Ascending aorta (tissue), 2 donors: ENCODE measurements at regions of chr13 and their contacts with region 1.

Region 1: GRCh38 chr13:21060987-21061763 is at the start of gene LATS2:
- DNase-seq: peak; percentile 82 to 98
- H3K4me3 ChIP-seq: peak within 1 kb of the TSS; percentile 84 to 89
- H3K27ac ChIP-seq: peak within 1 kb of the TSS; percentile 98 to 100
- H3K4me1 ChIP-seq: peaks cover 4 to 22% of the 10 kb centered on the region in 2 donors
- H3K27me3 ChIP-seq: no peaks in the 10 kb centered on the region
- CTCF ChIP-seq: peak in 2 of 3 experiments; percentile 41 to 50
- total RNA-seq, gene LATS2: 49.0 TPM

Region 2: GRCh38 chr13:20773194-20774080 is 287.7 kb before region 1 on chr13 and contains the start of gene EEF1AKMT1:
- intact Hi-C with region 1: loop called (anchors 10 kb)
- DNase-seq: peak; percentile 60 to 96
- H3K4me3 ChIP-seq: peak within 1 kb of the TSS; percentile 61 to 80
- H3K27ac ChIP-seq: peak within 1 kb of the TSS; percentile 85 to 87
- H3K4me1 ChIP-seq: peaks cover 0 to 7% of the 10 kb centered on the region in 2 donors
- H3K27me3 ChIP-seq: no peaks in the 10 kb centered on the region
- CTCF ChIP-seq: no peak
- total RNA-seq, gene EEF1AKMT1: not detected

Region 3: DNA sequence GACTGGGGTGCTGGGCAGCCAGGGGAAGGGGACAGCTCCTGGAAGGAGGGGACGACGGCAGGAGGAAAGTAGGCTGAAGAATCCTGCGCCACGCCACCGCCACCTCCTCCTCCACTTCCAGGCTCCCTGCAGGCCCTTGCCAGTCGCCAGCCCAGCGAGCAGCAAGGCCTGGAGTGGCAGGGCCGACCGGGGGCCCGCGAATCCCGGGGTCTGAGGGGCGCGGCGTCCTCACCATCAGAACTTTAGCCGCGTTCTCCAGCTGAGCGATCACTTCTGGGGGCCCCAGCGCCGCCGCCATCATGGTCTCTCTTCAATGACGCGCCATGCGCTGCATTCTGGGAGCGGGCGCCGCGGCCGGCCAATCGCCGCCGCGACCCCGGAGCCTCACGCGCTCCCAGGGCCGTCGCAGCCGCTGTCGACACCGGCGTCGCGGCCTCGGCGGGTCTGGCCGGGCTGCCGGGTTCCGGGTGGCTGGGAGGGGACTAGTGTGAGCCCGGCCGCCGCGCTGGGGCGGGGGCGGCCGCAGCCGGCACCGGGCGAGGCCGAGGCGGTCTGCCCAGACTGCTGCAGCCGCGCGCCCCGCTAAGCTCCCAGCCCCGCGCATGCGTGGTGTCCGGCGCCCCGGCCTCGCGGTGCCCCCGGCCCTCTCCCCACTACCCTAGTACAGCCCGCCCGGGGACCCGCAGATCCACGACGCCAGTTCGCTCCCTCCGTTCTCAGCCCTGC is 158.6 kb before region 1 on chr13 and contains the start of gene XPO4:
- intact Hi-C with region 1: loop called (anchors 5 kb)
- DNase-seq: peak; percentile 16 to 88
- H3K4me3 ChIP-seq: peak within 1 kb of the TSS; percentile 81 to 88
- H3K27ac ChIP-seq: peak within 1 kb of the TSS; percentile 93
- H3K4me1 ChIP-seq: peaks cover 3 to 10% of the 10 kb centered on the region in 2 donors
- H3K27me3 ChIP-seq: no peaks in the 10 kb centered on the region
- CTCF ChIP-seq: no peak
- total RNA-seq, gene XPO4: 5.1 TPM

Region 4: GRCh38 chr13:20997430-20998161 is 63.6 kb before region 1 on chr13:
- intact Hi-C with region 1: loop called (anchors 5 kb)
- DNase-seq: no peak
- H3K4me3 ChIP-seq: no peak overlapping the region
- H3K27ac ChIP-seq: peak overlapping the region; percentile 48 to 70
- H3K4me1 ChIP-seq: peaks cover 5 to 15% of the 10 kb centered on the region in 2 donors
- H3K27me3 ChIP-seq: no peaks in the 10 kb centered on the region
- CTCF ChIP-seq: no peak

Region 5: GRCh38 chr13:21033212-21033840 is 27.8 kb before region 1 on chr13:
- intact Hi-C with region 1: loop called (anchors 1 kb)
- DNase-seq: peak in 1 of 2 donors; percentile 84
- H3K4me3 ChIP-seq: peak overlapping the region in 1 of 2 donors; percentile 54
- H3K27ac ChIP-seq: peak overlapping the region; percentile 70 to 80
- H3K4me1 ChIP-seq: peaks cover 6 to 47% of the 10 kb centered on the region in 2 donors
- H3K27me3 ChIP-seq: no peaks in the 10 kb centered on the region
- CTCF ChIP-seq: no peak

Region 6: DNA sequence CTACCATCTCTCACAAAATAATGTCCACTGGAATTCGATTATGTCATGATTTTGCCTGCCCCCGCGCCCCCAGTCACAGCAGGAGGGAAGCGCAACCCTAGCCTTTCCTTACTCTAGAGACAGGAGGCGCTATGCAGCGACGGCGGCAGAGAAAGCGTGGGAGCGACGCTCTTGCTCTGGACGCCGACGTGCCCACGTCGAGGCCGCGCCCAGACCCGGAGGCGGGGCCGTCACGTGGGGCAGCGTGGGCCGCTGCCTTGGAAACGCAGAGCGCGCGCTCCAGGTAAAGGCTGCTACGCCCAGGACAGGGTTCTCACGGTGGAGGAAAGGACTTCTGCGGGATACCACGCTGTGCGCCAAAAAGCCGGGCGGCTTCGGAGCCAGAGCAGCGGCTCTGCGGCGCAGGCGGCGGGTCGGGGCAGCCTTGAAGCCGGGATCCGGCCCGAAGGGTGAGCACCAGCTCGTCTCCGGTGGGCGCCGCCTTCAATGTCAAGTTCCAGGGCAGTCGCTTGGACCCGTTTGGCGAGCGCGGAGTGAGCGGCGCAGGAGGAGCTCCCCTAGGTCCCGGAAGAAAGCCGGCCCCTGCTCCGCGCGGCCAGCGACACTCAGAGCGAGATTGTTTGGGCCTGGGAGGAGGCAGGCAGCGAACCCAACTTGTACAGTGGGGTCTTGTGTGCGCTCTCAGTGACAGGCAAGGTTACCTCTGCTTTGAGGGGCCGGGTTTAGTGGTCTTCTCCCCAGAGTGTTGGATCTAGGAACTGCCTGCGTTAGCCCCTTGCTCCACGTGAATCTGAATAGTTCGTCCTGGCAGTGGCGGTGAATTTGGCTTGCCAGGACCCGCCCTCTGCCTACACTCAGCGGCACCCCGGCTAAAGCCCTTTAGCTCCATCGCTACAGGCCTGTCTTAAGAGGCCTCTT is 237.0 kb after region 1 on chr13:
- intact Hi-C with region 1: loop called (anchors 5 kb)
- DNase-seq: peak; percentile 18 to 89
- H3K4me3 ChIP-seq: peak overlapping the region; percentile 88 to 94
- H3K27ac ChIP-seq: peak overlapping the region; percentile 73 to 81
- H3K4me1 ChIP-seq: peaks cover 0 to 6% of the 10 kb centered on the region in 2 donors
- H3K27me3 ChIP-seq: no peaks in the 10 kb centered on the region
- CTCF ChIP-seq: peak; percentile 86 to 88 (median 87)